T-cell (primary cell): ENCODE measurements at regions of chr6 and their contacts with region 1.

Region 1: GRCh38 chr6:3388786-3389185 is 68.1 kb downstream of the SLC22A23 start:
- DNase-seq: peak in 1 of 35 experiments; percentile 17
- ATAC-seq: no peak
- H3K4me3 ChIP-seq: no peak overlapping the region
- H3K4me3 Mint-ChIP-seq: no peak overlapping the region
- H3K27ac ChIP-seq: no peak overlapping the region
- H3K27ac Mint-ChIP-seq: no peak overlapping the region
- H3K4me1 ChIP-seq: no peaks in the 10 kb centered on the region
- H3K4me1 Mint-ChIP-seq: peaks cover 0 to 4% (median 0%) of the 10 kb centered on the region in 3 donors
- H3K27me3 ChIP-seq: peaks cover 0 to 11% of the 10 kb centered on the region in 2 experiments
- H3K27me3 Mint-ChIP-seq: no peaks in the 10 kb centered on the region

Region 2: DNA sequence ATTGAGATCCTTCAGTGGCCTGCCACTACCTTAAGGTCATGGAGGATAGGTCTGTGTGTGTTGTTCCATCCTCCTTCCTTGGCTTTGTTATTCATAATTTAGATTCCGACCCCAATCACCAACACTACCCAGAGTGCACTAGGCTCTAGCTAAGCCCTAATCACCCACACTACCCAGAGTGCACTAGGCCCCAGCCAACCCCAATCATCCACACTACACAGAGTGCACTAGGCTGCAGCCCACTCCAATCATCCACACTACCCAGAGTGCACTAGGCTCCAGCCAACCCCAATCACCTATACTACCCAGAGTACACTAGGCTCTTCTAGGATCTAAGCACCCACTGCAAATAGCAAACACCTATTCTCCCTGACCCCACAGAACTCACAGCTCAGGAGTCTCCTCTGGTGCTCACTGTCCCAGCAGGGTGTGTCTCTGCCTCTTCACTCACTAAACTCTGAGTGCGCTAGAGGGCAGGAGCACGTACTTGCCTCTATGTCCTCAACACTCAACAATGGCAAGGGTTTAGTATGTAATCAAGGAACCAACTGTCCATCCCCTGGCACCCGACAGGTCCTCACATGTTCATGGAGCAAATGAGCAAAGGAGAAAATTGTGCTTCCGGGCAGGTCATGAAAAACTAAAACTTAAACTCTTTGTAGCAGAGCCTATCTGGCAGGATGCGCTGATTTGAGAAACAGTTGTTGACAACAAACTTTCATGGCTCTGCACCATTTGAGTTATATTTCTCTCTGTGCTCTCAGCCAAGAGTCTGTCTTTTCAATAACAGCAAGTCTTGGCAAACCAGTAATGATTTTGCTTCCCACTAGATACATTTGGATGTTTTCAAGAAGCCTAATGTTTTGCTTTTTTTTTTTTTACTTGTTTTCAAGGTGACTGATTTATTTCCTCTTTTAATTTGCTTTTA is 13.8 kb after region 1 on chr6:
- CTCF ChIA-PET with region 1: no interaction called
- POLR2A ChIA-PET with region 1: no interaction called
- DNase-seq: no peak
- ATAC-seq: no peak
- H3K4me3 ChIP-seq: no peak overlapping the region
- H3K4me3 Mint-ChIP-seq: no peak overlapping the region
- H3K27ac ChIP-seq: no peak overlapping the region
- H3K27ac Mint-ChIP-seq: no peak overlapping the region
- H3K4me1 ChIP-seq: no peaks in the 10 kb centered on the region
- H3K4me1 Mint-ChIP-seq: no peaks in the 10 kb centered on the region
- H3K27me3 ChIP-seq: peaks cover 0 to 2% of the 10 kb centered on the region in 2 experiments
- H3K27me3 Mint-ChIP-seq: no peaks in the 10 kb centered on the region

Region 3: GRCh38 chr6:3427687-3428085 is 38.9 kb after region 1 on chr6:
- CTCF ChIA-PET with region 1: no interaction called
- POLR2A ChIA-PET with region 1: interaction called in 1 of 2 experiments, 11 read pairs
- DNase-seq: no peak
- ATAC-seq: no peak
- H3K4me3 ChIP-seq: no peak overlapping the region
- H3K4me3 Mint-ChIP-seq: no peak overlapping the region
- H3K27ac ChIP-seq: no peak overlapping the region
- H3K27ac Mint-ChIP-seq: no peak overlapping the region
- H3K4me1 ChIP-seq: no peaks in the 10 kb centered on the region
- H3K4me1 Mint-ChIP-seq: peaks cover 0 to 4% (median 0%) of the 10 kb centered on the region in 3 donors
- H3K27me3 ChIP-seq: peaks cover 0 to 10% of the 10 kb centered on the region in 2 experiments
- H3K27me3 Mint-ChIP-seq: peaks cover 0 to 4% of the 10 kb centered on the region in 2 donors